ENCODE measurements at regions of chr5 and their contacts with region 1.

Region 1: DNA sequence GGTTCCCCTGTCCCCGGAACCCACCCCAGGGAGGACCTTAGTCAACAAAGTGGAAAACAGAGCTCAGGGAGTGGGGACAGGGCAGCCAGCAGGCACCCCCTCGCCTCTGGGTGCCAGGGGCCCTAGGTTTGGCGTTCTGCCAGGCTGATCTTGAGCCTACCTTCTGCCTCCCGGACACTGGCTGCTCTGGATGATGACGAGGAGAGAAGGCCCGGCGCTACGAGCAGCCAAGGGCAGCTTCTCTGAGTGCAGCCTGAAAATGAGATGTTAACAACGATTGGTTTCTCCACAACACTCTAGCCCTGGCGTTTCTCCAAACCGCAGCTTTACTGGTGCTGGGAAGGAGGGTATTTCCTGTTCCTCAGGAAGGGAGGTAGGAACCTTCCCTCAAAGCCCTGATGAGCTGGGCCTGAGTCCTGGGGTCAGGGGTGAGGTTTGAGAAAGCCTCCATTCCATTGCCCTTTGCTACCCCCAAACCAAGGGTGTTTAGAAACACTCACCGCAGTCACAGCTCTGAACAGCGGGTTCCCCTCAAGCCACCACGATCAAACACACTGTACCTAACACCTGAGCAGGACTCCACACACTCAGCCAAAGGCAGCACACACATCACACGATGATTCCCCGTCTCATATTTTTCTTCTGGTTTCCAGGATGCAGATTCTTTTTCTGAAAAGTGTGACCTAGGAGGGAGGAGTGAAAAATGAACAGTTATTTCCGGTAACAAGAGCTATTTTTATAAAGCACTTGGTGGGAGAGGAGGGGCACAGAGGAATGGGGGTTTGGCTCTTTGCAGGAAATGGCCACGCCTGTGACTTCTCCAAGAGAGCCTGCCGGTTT is at the start of gene STING1:
- DNase-seq: peak; percentile 100
- H3K4me3 Mint-ChIP-seq: peak within 1 kb of the TSS; percentile 77
- H3K27ac Mint-ChIP-seq: peak within 1 kb of the TSS; percentile 92
- H3K4me1 Mint-ChIP-seq: peaks cover 24% of the 10 kb centered on the region
- H3K27me3 Mint-ChIP-seq: no peaks in the 10 kb centered on the region
- CTCF ChIP-seq: peak; percentile 1
- total RNA-seq, gene STING1: 33.1 and 35.1 TPM in 2 replicates

Region 2: GRCh38 chr5:139439013-139439903 is 43.0 kb before region 1 on chr5 and contains the start of gene DNAJC18:
- CTCF ChIA-PET with region 1: interaction called, 3 read pairs
- POLR2A ChIA-PET with region 1: interaction called, 15 read pairs
- intact Hi-C with region 1: loop called (anchors 1 kb)
- DNase-seq: peak; percentile 92
- H3K4me3 Mint-ChIP-seq: peak within 1 kb of the TSS; percentile 89
- H3K27ac Mint-ChIP-seq: peak within 1 kb of the TSS; percentile 96
- H3K4me1 Mint-ChIP-seq: peaks cover 11% of the 10 kb centered on the region
- H3K27me3 Mint-ChIP-seq: no peaks in the 10 kb centered on the region
- CTCF ChIP-seq: no peak
- total RNA-seq, gene DNAJC18: 14.1 and 15.1 TPM in 2 replicates

Region 3: DNA sequence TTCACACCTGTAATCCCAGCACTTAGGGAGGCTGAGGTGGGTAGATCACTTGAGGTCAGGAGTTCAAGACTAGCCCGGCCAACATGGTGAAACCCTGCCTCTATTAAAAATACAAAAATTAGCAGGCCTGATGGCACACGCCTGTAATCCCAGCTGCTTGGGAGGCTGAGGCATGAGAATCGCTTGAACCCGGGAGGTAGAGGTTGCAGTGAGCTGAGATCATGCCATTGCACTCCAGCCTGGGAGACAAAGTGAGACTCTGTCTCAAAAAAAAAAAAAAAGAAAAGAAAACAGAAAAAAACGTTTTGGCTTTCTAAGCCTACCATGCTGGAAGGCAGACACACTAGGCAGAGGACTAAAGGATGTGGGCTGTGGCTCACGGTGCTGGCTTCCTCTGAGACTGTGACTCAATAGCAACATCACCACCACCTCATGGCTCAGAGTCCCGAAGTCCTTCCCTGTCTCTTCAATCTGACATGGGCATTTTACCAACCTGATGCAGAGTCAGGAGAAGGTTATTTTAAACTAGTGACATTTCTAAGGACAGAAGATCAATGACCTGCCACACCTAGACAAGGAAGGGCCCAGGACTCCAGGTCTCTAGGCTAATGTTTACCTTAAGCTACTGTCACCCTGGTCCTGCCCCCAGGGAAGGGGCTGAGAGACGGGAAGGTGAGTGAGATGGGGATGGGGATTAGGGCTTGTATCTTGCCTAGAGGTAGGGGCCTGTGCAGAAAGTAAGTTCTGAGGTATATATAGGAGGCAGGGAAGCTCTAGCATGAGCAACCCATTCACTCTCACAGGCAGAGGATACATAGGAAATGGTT is 23.5 kb before region 1 on chr5:
- CTCF ChIA-PET with region 1: interaction called, 10 read pairs
- POLR2A ChIA-PET with region 1: interaction called, 4 read pairs
- intact Hi-C with region 1: no loop called
- DNase-seq: peak; percentile 33
- H3K4me3 Mint-ChIP-seq: no peak overlapping the region
- H3K27ac Mint-ChIP-seq: no peak overlapping the region
- H3K4me1 Mint-ChIP-seq: peaks cover 6% of the 10 kb centered on the region
- H3K27me3 Mint-ChIP-seq: no peaks in the 10 kb centered on the region
- CTCF ChIP-seq: no peak

Region 4: DNA sequence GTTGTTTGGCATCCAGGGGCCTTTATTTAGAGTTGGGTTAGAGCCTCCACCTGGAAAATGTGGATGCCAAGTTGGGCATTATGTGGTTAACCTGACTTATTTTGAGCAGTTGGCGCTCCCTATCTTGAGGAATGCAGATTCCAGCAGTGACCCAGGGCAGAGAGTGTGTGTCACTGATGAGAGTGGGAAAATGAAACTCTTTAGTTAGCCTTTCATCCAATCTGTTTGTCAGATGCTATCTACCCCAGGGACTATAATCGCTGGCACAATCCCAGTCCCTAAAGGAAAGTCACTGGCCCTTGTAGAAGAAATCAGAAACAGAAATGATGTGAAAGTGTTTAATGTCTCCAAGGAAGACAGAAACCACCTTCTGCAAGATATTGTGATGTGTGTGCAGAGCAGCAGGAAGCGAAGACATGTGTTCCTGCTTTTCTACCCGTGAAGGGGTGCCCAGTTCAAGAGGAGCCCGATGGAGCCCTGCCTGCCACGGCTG is 10.5 kb after region 1 on chr5:
- CTCF ChIA-PET with region 1: interaction called, 6 read pairs
- POLR2A ChIA-PET with region 1: interaction called, 11 read pairs
- intact Hi-C with region 1: no loop called
- DNase-seq: peak; percentile 24
- H3K4me3 Mint-ChIP-seq: no peak overlapping the region
- H3K27ac Mint-ChIP-seq: no peak overlapping the region
- H3K4me1 Mint-ChIP-seq: peaks cover 9% of the 10 kb centered on the region
- H3K27me3 Mint-ChIP-seq: no peaks in the 10 kb centered on the region
- CTCF ChIP-seq: no peak

Measured in MCF 10A (cell line).